ENCODE measurements at regions of chr6 and their contacts with region 1.

Region 1: GRCh38 chr6:166956444-166957086 is at the start of gene RNASET2:
- DNase-seq: peak; percentile 96 to 100 (median 99)
- ATAC-seq: peak; percentile 87
- H3K4me3 ChIP-seq: peak within 1 kb of the TSS; percentile 74 to 75
- H3K4me3 Mint-ChIP-seq: peak within 1 kb of the TSS; percentile 93
- H3K27ac ChIP-seq: peak within 1 kb of the TSS; percentile 81 to 86
- H3K27ac Mint-ChIP-seq: peak within 1 kb of the TSS; percentile 98
- H3K4me1 ChIP-seq: peaks cover 68% of the 10 kb centered on the region
- H3K4me1 Mint-ChIP-seq: peaks cover 70% of the 10 kb centered on the region
- H3K27me3 ChIP-seq: no peaks in the 10 kb centered on the region
- H3K27me3 Mint-ChIP-seq: no peaks in the 10 kb centered on the region
- CTCF ChIP-seq: no peak
- total RNA-seq, gene RNASET2: 93.1 to 98.9 TPM

Region 2: GRCh38 chr6:165497467-165497866 is 1459.1 kb before region 1 on chr6:
- CTCF ChIA-PET with region 1: no interaction called
- POLR2A ChIA-PET with region 1: no interaction called
- intact Hi-C with region 1: no loop called
- DNase-seq: no peak
- ATAC-seq: no peak
- H3K4me3 ChIP-seq: no peak overlapping the region
- H3K4me3 Mint-ChIP-seq: no peak overlapping the region
- H3K27ac ChIP-seq: no peak overlapping the region
- H3K27ac Mint-ChIP-seq: no peak overlapping the region
- H3K4me1 ChIP-seq: no peaks in the 10 kb centered on the region
- H3K4me1 Mint-ChIP-seq: no peaks in the 10 kb centered on the region
- H3K27me3 ChIP-seq: no peaks in the 10 kb centered on the region
- H3K27me3 Mint-ChIP-seq: no peaks in the 10 kb centered on the region
- CTCF ChIP-seq: no peak

Region 3: DNA sequence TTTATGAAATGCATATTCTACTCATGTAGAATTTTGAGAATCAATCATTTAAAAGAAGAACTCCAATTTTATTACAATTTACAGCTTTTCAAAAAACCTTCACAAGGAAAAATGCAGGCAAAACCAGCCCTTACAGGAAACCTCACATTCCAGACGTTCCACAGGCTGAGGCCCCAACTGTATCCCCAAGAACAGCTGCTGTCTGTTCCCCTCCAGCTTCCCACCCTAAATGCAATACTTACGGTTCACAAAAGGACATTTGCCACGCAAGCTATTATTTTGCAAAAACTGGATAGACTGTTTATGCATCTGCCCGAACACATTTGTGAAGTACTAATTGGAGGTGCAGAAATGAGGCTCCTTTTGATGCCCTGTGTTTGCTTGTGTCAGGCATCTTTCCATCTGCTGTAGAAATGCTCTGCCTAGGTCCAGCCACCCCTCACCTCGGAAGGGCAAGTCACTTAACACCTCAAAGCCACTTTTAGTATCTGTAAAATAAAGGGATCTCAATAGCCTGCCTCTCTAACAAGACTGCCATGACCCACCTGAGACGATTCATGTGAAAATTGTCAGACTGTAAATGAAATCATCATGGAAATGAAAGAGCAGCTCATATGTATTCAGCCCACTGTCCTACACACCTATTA is 1320.0 kb before region 1 on chr6:
- CTCF ChIA-PET with region 1: no interaction called
- POLR2A ChIA-PET with region 1: no interaction called
- intact Hi-C with region 1: no loop called
- DNase-seq: no peak
- ATAC-seq: no peak
- H3K4me3 ChIP-seq: no peak overlapping the region
- H3K4me3 Mint-ChIP-seq: no peak overlapping the region
- H3K27ac ChIP-seq: no peak overlapping the region
- H3K27ac Mint-ChIP-seq: no peak overlapping the region
- H3K4me1 ChIP-seq: no peaks in the 10 kb centered on the region
- H3K4me1 Mint-ChIP-seq: peaks cover 2% of the 10 kb centered on the region
- H3K27me3 ChIP-seq: no peaks in the 10 kb centered on the region
- H3K27me3 Mint-ChIP-seq: peaks cover 11% of the 10 kb centered on the region
- CTCF ChIP-seq: no peak

Region 4: DNA sequence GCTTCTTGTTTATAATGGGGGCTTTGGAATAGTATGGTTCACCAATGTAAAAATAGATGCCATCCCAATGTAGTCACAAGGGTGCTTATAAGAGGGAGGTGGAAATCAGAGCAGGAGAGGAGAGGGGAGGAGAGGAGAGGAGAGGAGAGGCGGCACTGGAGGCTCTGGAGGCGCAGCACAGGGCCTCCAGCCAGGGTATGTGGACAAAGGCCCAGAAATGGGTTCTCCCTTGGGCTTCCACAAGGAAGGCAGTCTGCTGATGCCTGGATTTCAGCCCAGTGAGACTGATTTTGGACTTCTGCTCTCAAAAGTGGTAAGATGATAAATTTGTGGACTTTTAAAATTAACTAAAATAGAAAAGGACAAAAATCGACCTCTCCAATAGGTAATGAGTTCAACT is 117.0 kb before region 1 on chr6:
- CTCF ChIA-PET with region 1: no interaction called
- POLR2A ChIA-PET with region 1: no interaction called
- intact Hi-C with region 1: no loop called
- DNase-seq: no peak
- ATAC-seq: no peak
- H3K4me3 ChIP-seq: no peak overlapping the region
- H3K4me3 Mint-ChIP-seq: no peak overlapping the region
- H3K27ac ChIP-seq: no peak overlapping the region
- H3K27ac Mint-ChIP-seq: no peak overlapping the region
- H3K4me1 ChIP-seq: no peaks in the 10 kb centered on the region
- H3K4me1 Mint-ChIP-seq: no peaks in the 10 kb centered on the region
- H3K27me3 ChIP-seq: no peaks in the 10 kb centered on the region
- H3K27me3 Mint-ChIP-seq: peaks cover 2% of the 10 kb centered on the region
- CTCF ChIP-seq: no peak

Region 5: GRCh38 chr6:166936079-166936787 is 20.3 kb before region 1 on chr6:
- CTCF ChIA-PET with region 1: interaction called, 27 read pairs
- POLR2A ChIA-PET with region 1: interaction called, 4 read pairs
- intact Hi-C with region 1: no loop called
- DNase-seq: peak in 1 of 9 experiments; percentile 23
- ATAC-seq: peak; percentile 61
- H3K4me3 ChIP-seq: no peak overlapping the region
- H3K4me3 Mint-ChIP-seq: no peak overlapping the region
- H3K27ac ChIP-seq: no peak overlapping the region
- H3K27ac Mint-ChIP-seq: peak overlapping the region; percentile 27
- H3K4me1 ChIP-seq: peaks cover 17% of the 10 kb centered on the region
- H3K4me1 Mint-ChIP-seq: peaks cover 21% of the 10 kb centered on the region
- H3K27me3 ChIP-seq: no peaks in the 10 kb centered on the region
- H3K27me3 Mint-ChIP-seq: no peaks in the 10 kb centered on the region
- CTCF ChIP-seq: no peak

Region 6: GRCh38 chr6:166969390-166970002 is 12.9 kb after region 1 on chr6:
- CTCF ChIA-PET with region 1: interaction called, 5 read pairs
- POLR2A ChIA-PET with region 1: interaction called, 14 read pairs
- intact Hi-C with region 1: no loop called
- DNase-seq: peak in 1 of 9 experiments; percentile 34
- ATAC-seq: no peak
- H3K4me3 ChIP-seq: peak overlapping the region in 1 of 2 experiments; percentile 10
- H3K4me3 Mint-ChIP-seq: peak overlapping the region; percentile 49
- H3K27ac ChIP-seq: no peak overlapping the region
- H3K27ac Mint-ChIP-seq: peak overlapping the region; percentile 77
- H3K4me1 ChIP-seq: peaks cover 22% of the 10 kb centered on the region
- H3K4me1 Mint-ChIP-seq: peaks cover 30% of the 10 kb centered on the region
- H3K27me3 ChIP-seq: no peaks in the 10 kb centered on the region
- H3K27me3 Mint-ChIP-seq: no peaks in the 10 kb centered on the region
- CTCF ChIP-seq: no peak